Dendritic cell treated with granulocyte-macrophage colony-stimulating factor and Interleukin-4, amounts not matched to agents 40 ng/mL and 50 ng/mL, for 4 days (primary cell): ENCODE measurements at regions of chr2 and their contacts with region 1.

Region 1: GRCh38 chr2:69724540-69725159 is 17.3 kb upstream of the ANXA4 start:
- H3K4me3 Mint-ChIP-seq: peak overlapping the region; percentile 64
- H3K27ac Mint-ChIP-seq: no peak overlapping the region
- H3K4me1 Mint-ChIP-seq: peaks cover 12% of the 10 kb centered on the region
- H3K27me3 Mint-ChIP-seq: no peaks in the 10 kb centered on the region

Region 2: GRCh38 chr2:69572641-69573040 is 152.0 kb before region 1 on chr2:
- intact Hi-C with region 1: no loop called
- H3K4me3 Mint-ChIP-seq: peak overlapping the region; percentile 37
- H3K27ac Mint-ChIP-seq: peak overlapping the region; percentile 79
- H3K4me1 Mint-ChIP-seq: peaks cover 77% of the 10 kb centered on the region
- H3K27me3 Mint-ChIP-seq: no peaks in the 10 kb centered on the region

Region 3: DNA sequence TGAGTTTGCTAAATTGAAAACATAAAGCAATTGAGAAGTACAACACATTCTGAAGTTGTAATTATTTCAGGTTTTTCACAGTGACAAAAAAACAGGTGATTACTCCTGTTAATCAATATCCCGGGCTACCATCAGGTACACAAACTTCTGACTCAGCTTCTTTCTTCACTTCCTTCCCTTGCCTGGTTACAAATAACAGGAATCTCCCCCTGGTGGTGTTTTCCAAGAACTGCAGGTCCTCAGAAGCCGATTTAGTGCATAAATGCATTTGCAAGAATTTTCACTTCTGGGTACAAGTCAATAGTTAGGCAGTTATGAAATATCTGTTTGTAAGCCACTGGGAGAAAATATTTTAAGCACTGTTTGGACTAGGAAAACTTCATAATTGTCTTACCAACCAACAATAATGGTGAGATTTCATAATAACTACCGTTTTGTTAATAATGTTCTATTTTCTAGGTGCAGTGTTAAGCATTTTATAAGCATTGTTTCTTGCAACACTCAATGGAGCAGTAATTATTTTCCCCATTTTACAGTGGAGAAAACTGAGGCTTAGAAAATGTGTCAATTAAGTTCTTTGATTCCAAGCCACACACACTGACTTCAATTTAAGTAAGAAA is 92.4 kb after region 1 on chr2:
- intact Hi-C with region 1: loop called (anchors 1 kb)
- H3K4me3 Mint-ChIP-seq: no peak overlapping the region
- H3K27ac Mint-ChIP-seq: no peak overlapping the region
- H3K4me1 Mint-ChIP-seq: no peaks in the 10 kb centered on the region
- H3K27me3 Mint-ChIP-seq: no peaks in the 10 kb centered on the region

Region 4: GRCh38 chr2:69888451-69888850 is 163.8 kb after region 1 on chr2:
- intact Hi-C with region 1: loop called (anchors 10 kb)
- H3K4me3 Mint-ChIP-seq: no peak overlapping the region
- H3K27ac Mint-ChIP-seq: no peak overlapping the region
- H3K4me1 Mint-ChIP-seq: peaks cover 7% of the 10 kb centered on the region
- H3K27me3 Mint-ChIP-seq: no peaks in the 10 kb centered on the region

Region 5: DNA sequence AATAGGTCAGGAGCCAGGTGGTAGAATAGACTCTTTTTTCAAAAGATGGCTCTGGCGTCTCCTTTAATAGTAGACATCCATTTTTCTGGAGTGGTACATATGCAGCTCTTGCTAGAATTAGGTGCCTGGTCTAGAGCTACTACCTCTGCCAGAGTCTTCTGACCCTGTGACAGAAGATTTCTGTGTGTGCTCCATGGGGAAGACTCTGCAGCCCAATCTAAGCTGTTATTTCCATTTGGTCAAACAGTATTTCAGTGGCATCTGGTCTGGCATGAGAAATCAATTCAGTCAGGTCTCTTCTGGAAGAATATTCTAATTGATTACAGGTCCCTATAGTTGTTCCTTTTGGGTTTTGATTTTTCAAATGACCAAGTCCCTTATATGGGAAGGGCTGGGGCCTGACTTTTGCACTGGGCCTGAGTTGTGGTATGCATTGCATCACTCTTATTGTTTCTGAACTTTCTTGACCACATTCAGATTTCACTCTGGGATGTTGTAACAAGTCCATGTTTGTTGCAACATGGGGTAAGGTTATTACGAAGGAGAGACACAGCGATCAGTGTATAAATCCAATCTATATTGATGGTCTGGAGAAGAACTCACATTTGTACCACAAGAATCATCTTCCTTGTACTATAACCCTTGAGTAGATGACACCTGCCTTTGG is 202.3 kb after region 1 on chr2:
- intact Hi-C with region 1: no loop called
- H3K4me3 Mint-ChIP-seq: no peak overlapping the region
- H3K27ac Mint-ChIP-seq: no peak overlapping the region
- H3K4me1 Mint-ChIP-seq: peaks cover 66% of the 10 kb centered on the region
- H3K27me3 Mint-ChIP-seq: no peaks in the 10 kb centered on the region